H1 (cell line): ENCODE measurements at regions of chr3 and their contacts with region 1.

Region 1: GRCh38 chr3:100776746-100777145 is 67.5 kb downstream of the TFG start:
- DNase-seq: peak in 1 of 2 experiments; percentile 63
- H3K4me3 ChIP-seq: no peak overlapping the region
- H3K27ac ChIP-seq: no peak overlapping the region
- H3K4me1 ChIP-seq: no peaks in the 10 kb centered on the region
- H3K27me3 ChIP-seq: peaks cover 0 to 1% (median 0%) of the 10 kb centered on the region in 4 experiments; a peak in 1 of 7 replicates
- CTCF ChIP-seq: peak; percentile 53 to 73 (median 65)
- EP300 ChIP-seq: no peak
- POLR2A ChIP-seq: no peak
- RAD21 ChIP-seq: peak; percentile 43 to 65

Region 2: GRCh38 chr3:100761211-100761942 is 15.4 kb before region 1 on chr3:
- CTCF ChIA-PET with region 1: interaction called, 33 read pairs
- POLR2A ChIA-PET with region 1: interaction called, 3 read pairs
- DNase-seq: no peak
- H3K4me3 ChIP-seq: no peak overlapping the region
- H3K27ac ChIP-seq: no peak overlapping the region
- H3K4me1 ChIP-seq: 0 out of 7 replicates have a peak, but pooled peaks cover 0 to 3% (median 0%) of the 10 kb centered on the region in 4 experiments
- H3K27me3 ChIP-seq: no peaks in the 10 kb centered on the region
- CTCF ChIP-seq: peak; percentile 28 to 59 (median 48); a peak in 3 of 4 replicates
- EP300 ChIP-seq: no peak
- POLR2A ChIP-seq: no peak
- RAD21 ChIP-seq: peak; percentile 35 to 47

Region 3: DNA sequence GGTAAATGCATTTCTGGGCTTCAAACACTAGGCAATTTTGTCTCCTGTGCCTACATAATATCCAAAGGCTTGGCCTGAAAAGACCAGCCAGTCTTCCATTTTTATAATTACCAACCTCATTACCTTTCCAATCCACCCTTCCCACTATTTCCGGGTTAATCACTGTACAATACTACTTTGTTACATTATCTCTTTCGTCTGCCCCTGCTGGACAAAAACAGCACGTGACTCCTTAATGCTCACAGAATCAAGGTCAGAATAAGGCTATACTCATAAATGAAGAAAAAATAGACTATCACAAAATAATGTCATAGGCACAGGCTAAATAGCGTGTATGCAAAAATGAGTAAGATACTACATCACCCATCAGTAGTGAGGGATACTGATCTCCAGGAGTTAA is 176.4 kb after region 1 on chr3:
- CTCF ChIA-PET with region 1: no interaction called
- POLR2A ChIA-PET with region 1: no interaction called
- DNase-seq: no peak
- H3K4me3 ChIP-seq: no peak overlapping the region
- H3K27ac ChIP-seq: no peak overlapping the region
- H3K4me1 ChIP-seq: no peaks in the 10 kb centered on the region
- H3K27me3 ChIP-seq: no peaks in the 10 kb centered on the region
- CTCF ChIP-seq: peak in 1 of 3 experiments; percentile 10; a peak in 1 of 4 replicates
- EP300 ChIP-seq: no peak
- POLR2A ChIP-seq: no peak
- RAD21 ChIP-seq: no peak